ENCODE measurements at regions of chr11 and their contacts with region 1.

Region 1: GRCh38 chr11:108877178-108877577 is 212.3 kb downstream of the DDX10 start:
- DNase-seq: no peak
- ATAC-seq: no peak
- H3K4me3 ChIP-seq: no peak overlapping the region
- H3K27ac ChIP-seq: no peak overlapping the region
- H3K4me1 ChIP-seq: no peaks in the 10 kb centered on the region
- H3K27me3 ChIP-seq: no peaks in the 10 kb centered on the region
- CTCF ChIP-seq: no peak
- EP300 ChIP-seq: no peak
- POLR2A ChIP-seq: no peak
- RAD21 ChIP-seq: no peak

Region 2: DNA sequence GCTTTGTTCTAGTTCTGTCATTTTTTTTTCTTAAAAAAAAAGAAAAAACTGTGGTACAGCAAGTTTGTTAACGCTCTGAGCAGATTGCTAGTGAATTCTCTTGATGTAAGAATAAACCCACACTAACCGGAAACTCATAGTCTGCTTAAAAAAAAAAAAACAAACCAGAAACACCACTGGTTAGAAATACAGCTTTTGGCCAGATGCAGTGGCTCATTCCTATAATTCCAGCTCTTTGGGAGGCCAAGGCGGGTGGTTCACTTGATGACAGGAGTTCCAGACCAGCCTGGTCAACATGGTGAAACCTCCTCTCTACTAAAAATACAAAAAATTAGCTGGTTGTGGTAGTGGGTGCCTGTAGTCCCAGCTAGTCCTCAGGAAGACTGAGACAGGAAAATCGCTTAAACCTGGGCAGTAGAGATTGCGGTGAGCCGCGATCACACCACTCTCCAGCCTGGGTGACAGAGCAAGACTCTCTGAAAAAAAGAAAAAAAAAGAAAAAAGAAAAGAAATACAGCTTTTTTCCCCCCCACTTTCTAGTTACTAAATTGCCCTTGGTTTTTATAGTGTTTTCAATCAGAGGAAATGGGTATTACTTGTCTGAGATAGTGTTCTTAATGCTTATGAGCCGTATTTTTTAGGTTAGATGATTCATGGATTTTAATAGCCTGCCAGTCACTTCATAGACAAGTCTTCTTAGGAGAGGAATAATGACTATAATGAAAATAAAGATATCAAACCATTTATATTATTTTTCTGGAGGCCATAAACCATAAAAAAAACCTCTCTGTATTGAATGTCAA is 10.5 kb after region 1 on chr11:
- CTCF ChIA-PET with region 1: no interaction called
- POLR2A ChIA-PET with region 1: no interaction called
- in situ Hi-C with region 1: no loop called
- intact Hi-C with region 1: no loop called
- DNase-seq: no peak
- ATAC-seq: no peak
- H3K4me3 ChIP-seq: no peak overlapping the region
- H3K27ac ChIP-seq: no peak overlapping the region
- H3K4me1 ChIP-seq: no peaks in the 10 kb centered on the region
- H3K27me3 ChIP-seq: no peaks in the 10 kb centered on the region
- CTCF ChIP-seq: no peak
- EP300 ChIP-seq: no peak
- POLR2A ChIP-seq: no peak
- RAD21 ChIP-seq: no peak

Region 3: DNA sequence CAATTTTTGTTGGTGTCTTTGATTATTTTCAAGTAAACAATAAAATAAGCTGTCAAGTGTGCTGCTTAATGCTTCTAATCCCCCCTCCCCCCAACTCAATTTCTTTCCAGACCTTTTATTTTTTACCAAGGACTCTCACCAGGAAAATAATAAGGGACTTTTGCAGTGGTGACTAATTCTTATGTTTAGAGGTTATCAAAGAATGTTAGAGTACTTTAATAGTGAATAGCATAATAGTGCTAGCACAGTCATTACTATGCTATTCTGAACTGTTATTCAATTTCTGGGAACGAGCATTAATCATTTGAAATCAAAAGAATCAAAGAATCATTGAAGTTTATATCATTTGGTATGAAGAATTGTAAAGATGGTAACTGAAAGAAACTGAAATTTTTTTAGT is 39.1 kb after region 1 on chr11:
- CTCF ChIA-PET with region 1: no interaction called
- POLR2A ChIA-PET with region 1: no interaction called
- in situ Hi-C with region 1: no loop called
- intact Hi-C with region 1: loop called (anchors 1 kb)
- DNase-seq: no peak
- ATAC-seq: no peak
- H3K4me3 ChIP-seq: no peak overlapping the region
- H3K27ac ChIP-seq: no peak overlapping the region
- H3K4me1 ChIP-seq: no peaks in the 10 kb centered on the region
- H3K27me3 ChIP-seq: no peaks in the 10 kb centered on the region
- CTCF ChIP-seq: no peak
- EP300 ChIP-seq: no peak
- POLR2A ChIP-seq: no peak
- RAD21 ChIP-seq: no peak